Activated CD8-positive, alpha-beta T cell treated with anti-CD3 and anti-CD28 coated beads for 36 hours (primary cell): ENCODE measurements at regions of chr9 and their contacts with region 1.

Region 1: GRCh38 chr9:15211160-15211814 is 95.7 kb downstream of the TTC39B start:
- DNase-seq: peak; percentile 65
- ATAC-seq: peak; percentile 70
- H3K4me3 Mint-ChIP-seq: no peak overlapping the region
- H3K27ac Mint-ChIP-seq: no peak overlapping the region
- H3K4me1 Mint-ChIP-seq: peaks cover 6% of the 10 kb centered on the region
- H3K27me3 Mint-ChIP-seq: no peaks in the 10 kb centered on the region
- CTCF ChIP-seq: peak; percentile 95

Region 2: GRCh38 chr9:15231788-15232635 is 20.7 kb after region 1 on chr9:
- CTCF ChIA-PET with region 1: interaction called, 26 read pairs
- POLR2A ChIA-PET with region 1: no interaction called
- intact Hi-C with region 1: no loop called
- DNase-seq: peak; percentile 35
- ATAC-seq: peak; percentile 72
- H3K4me3 Mint-ChIP-seq: no peak overlapping the region
- H3K27ac Mint-ChIP-seq: no peak overlapping the region
- H3K4me1 Mint-ChIP-seq: peaks cover 27% of the 10 kb centered on the region
- H3K27me3 Mint-ChIP-seq: no peaks in the 10 kb centered on the region
- CTCF ChIP-seq: peak; percentile 66

Region 3: GRCh38 chr9:15310107-15310850 is 99.0 kb after region 1 on chr9:
- CTCF ChIA-PET with region 1: interaction called, 13 read pairs
- POLR2A ChIA-PET with region 1: no interaction called
- intact Hi-C with region 1: no loop called
- DNase-seq: peak; percentile 30
- ATAC-seq: peak; percentile 69
- H3K4me3 Mint-ChIP-seq: peak overlapping the region; percentile 33
- H3K27ac Mint-ChIP-seq: peak overlapping the region; percentile 88
- H3K4me1 Mint-ChIP-seq: peaks cover 34% of the 10 kb centered on the region
- H3K27me3 Mint-ChIP-seq: no peaks in the 10 kb centered on the region
- CTCF ChIP-seq: no peak

Region 4: DNA sequence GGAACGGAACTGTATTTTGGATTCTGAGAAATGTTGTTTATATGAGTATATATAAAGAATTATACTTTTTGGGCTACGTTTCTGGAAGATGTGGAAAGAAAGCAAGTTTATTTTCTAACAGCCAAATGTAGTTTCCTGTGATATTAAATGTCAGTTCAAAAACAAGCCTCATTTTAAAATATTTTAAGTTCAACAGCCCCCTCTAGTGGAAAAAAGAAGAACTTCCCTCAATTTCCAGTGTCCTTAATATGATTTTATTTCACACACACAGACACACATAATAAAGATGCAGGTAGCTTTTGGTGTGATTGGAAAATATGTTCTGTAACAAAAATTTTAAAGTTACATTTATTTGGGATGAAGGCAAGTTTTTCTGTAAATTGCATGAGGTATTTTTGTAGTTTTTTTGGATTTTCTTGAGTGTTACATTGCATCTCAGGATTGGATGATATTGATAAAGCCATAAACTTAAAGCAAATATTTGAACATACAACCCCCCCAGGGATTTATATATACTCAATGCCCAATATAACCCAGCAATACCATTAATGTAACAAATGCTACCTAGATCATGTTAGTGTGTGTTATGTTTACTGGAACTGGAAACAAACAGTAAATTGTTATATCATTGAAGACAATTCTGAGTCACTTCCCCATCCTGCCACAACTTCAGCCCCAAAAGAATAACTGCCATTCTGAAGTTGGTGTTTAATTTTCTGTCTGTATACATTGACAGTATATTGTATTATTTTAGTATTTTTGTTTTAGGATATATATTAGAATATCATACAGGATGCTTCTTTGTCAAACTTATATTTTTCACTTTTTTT is 395.6 kb after region 1 on chr9:
- CTCF ChIA-PET with region 1: interaction called, 24 read pairs
- POLR2A ChIA-PET with region 1: no interaction called
- intact Hi-C with region 1: loop called (anchors 10 kb)
- DNase-seq: peak; percentile 2
- ATAC-seq: peak; percentile 70
- H3K4me3 Mint-ChIP-seq: no peak overlapping the region
- H3K27ac Mint-ChIP-seq: no peak overlapping the region
- H3K4me1 Mint-ChIP-seq: peaks cover 4% of the 10 kb centered on the region
- H3K27me3 Mint-ChIP-seq: no peaks in the 10 kb centered on the region
- CTCF ChIP-seq: peak; percentile 78